Sigmoid colon (tissue), 7 donors: ENCODE measurements at regions of chr5 and their contacts with region 1.

Region 1: GRCh38 chr5:54443270-54443669 is 12.2 kb upstream of the HSPB3 start:
- DNase-seq: no peak
- H3K4me3 ChIP-seq: no peak overlapping the region
- H3K27ac ChIP-seq: no peak overlapping the region
- H3K4me1 ChIP-seq: peaks cover 0 to 12% (median 2%) of the 10 kb centered on the region in 4 donors
- H3K27me3 ChIP-seq: no peaks in the 10 kb centered on the region
- CTCF ChIP-seq: no peak
- EP300 ChIP-seq: no peak
- POLR2A ChIP-seq: no peak

Region 2: DNA sequence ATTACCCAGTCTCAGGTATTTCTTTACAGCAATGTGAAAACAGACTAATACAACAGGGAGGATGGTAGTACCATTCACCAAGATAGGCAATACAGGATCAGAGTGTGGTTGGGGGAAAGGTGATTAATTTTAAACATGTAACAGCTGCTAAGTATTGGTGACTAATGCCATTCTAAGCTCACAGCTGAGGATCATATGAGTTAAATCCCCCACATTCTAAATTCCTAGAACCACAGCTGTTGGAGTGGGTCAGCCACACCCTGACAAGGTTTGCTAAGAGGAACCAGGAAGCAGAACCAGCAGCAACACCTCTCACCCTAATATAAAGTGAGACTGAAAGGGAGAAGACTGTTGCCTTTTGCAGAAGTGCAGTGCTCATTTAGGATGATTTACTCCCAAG is 37.0 kb after region 1 on chr5:
- intact Hi-C with region 1: loop called (anchors 5 kb)
- DNase-seq: no peak
- H3K4me3 ChIP-seq: no peak overlapping the region
- H3K27ac ChIP-seq: no peak overlapping the region
- H3K4me1 ChIP-seq: no peaks in the 10 kb centered on the region
- H3K27me3 ChIP-seq: no peaks in the 10 kb centered on the region
- CTCF ChIP-seq: no peak
- EP300 ChIP-seq: no peak
- POLR2A ChIP-seq: no peak